ENCODE measurements at regions of chr14 and their contacts with region 1.

Region 1: GRCh38 chr14:63543000-63543825 is at the start of gene PPP2R5E:
- DNase-seq: peak; percentile 98 to 99
- H3K4me3 ChIP-seq: peak within 1 kb of the TSS; percentile 85
- H3K4me3 Mint-ChIP-seq: peak within 1 kb of the TSS; percentile 86
- H3K27ac Mint-ChIP-seq: peak within 1 kb of the TSS; percentile 89
- H3K4me1 ChIP-seq: peaks cover 16% of the 10 kb centered on the region
- H3K4me1 Mint-ChIP-seq: peaks cover 25% of the 10 kb centered on the region
- H3K27me3 ChIP-seq: no peaks in the 10 kb centered on the region
- H3K27me3 Mint-ChIP-seq: no peaks in the 10 kb centered on the region
- CTCF ChIP-seq: no peak
- total RNA-seq, gene PPP2R5E: 56.6 and 58.6 TPM in 2 replicates

Region 2: DNA sequence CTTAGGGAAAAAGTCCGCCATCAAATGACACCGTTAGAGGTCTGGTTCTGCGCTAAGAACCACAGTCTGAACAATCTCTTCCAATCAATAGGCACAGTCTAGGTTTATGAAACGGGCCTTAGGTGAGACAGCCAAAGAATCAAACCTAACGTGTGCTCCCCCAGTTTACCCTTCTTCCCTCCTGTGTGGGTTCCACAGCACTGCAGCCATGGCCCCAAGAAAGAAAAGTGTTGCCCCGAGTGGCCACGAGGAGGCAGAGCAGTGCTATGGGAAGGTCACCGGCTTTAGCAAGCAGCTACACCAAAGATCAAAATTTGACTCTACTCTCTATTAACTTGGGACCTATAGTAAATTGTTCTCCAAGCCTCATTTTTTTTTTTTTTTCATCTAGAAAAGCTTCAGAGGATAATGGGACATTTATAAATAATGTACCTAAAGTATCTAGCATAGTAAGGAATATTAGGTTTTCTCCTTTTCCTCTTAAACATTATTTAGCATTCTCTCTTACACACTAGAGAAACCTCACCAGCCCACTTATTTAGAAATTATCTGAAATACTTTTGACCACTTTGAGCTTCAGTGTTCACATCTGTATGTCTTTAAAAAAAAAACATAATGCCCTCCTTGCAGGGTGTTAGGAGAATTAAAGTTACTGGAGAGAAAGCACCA is 154.3 kb before region 1 on chr14:
- CTCF ChIA-PET with region 1: interaction called, 11 read pairs
- POLR2A ChIA-PET with region 1: no interaction called
- intact Hi-C with region 1: loop called (anchors 2 kb)
- DNase-seq: peak; percentile 46 to 57
- H3K4me3 ChIP-seq: no peak overlapping the region
- H3K4me3 Mint-ChIP-seq: no peak overlapping the region
- H3K27ac Mint-ChIP-seq: no peak overlapping the region
- H3K4me1 ChIP-seq: no peaks in the 10 kb centered on the region
- H3K4me1 Mint-ChIP-seq: no peaks in the 10 kb centered on the region
- H3K27me3 ChIP-seq: no peaks in the 10 kb centered on the region
- H3K27me3 Mint-ChIP-seq: no peaks in the 10 kb centered on the region
- CTCF ChIP-seq: peak; percentile 56 to 79

Region 3: GRCh38 chr14:63524537-63525155 is 18.6 kb before region 1 on chr14:
- CTCF ChIA-PET with region 1: no interaction called
- POLR2A ChIA-PET with region 1: interaction called, 12 read pairs
- intact Hi-C with region 1: no loop called
- DNase-seq: no peak
- H3K4me3 ChIP-seq: no peak overlapping the region
- H3K4me3 Mint-ChIP-seq: no peak overlapping the region
- H3K27ac Mint-ChIP-seq: peak overlapping the region; percentile 49
- H3K4me1 ChIP-seq: no peaks in the 10 kb centered on the region
- H3K4me1 Mint-ChIP-seq: peaks cover 11% of the 10 kb centered on the region
- H3K27me3 ChIP-seq: no peaks in the 10 kb centered on the region
- H3K27me3 Mint-ChIP-seq: no peaks in the 10 kb centered on the region
- CTCF ChIP-seq: no peak

Region 4: GRCh38 chr14:63652406-63652805 is 109.2 kb after region 1 on chr14:
- CTCF ChIA-PET with region 1: no interaction called
- POLR2A ChIA-PET with region 1: no interaction called
- intact Hi-C with region 1: no loop called
- DNase-seq: no peak
- H3K4me3 ChIP-seq: no peak overlapping the region
- H3K4me3 Mint-ChIP-seq: no peak overlapping the region
- H3K27ac Mint-ChIP-seq: no peak overlapping the region
- H3K4me1 ChIP-seq: peaks cover 10% of the 10 kb centered on the region
- H3K4me1 Mint-ChIP-seq: peaks cover 15% of the 10 kb centered on the region
- H3K27me3 ChIP-seq: no peaks in the 10 kb centered on the region
- H3K27me3 Mint-ChIP-seq: no peaks in the 10 kb centered on the region
- CTCF ChIP-seq: no peak

Region 5: GRCh38 chr14:63727774-63728728 is 184.8 kb after region 1 on chr14 and contains the start of gene SGPP1:
- CTCF ChIA-PET with region 1: no interaction called
- POLR2A ChIA-PET with region 1: interaction called, 4 read pairs
- intact Hi-C with region 1: loop called (anchors 2 kb)
- DNase-seq: peak; percentile 78 to 85
- H3K4me3 ChIP-seq: peak within 1 kb of the TSS; percentile 89
- H3K4me3 Mint-ChIP-seq: peak within 1 kb of the TSS; percentile 97
- H3K27ac Mint-ChIP-seq: peak within 1 kb of the TSS; percentile 95
- H3K4me1 ChIP-seq: peaks cover 6% of the 10 kb centered on the region
- H3K4me1 Mint-ChIP-seq: peaks cover 23% of the 10 kb centered on the region
- H3K27me3 ChIP-seq: no peaks in the 10 kb centered on the region
- H3K27me3 Mint-ChIP-seq: no peaks in the 10 kb centered on the region
- CTCF ChIP-seq: peak; percentile 46 to 55
- total RNA-seq, gene SGPP1: 15.2 and 16.9 TPM in 2 replicates

Region 6: GRCh38 chr14:63840981-63841380 is 297.8 kb after region 1 on chr14:
- CTCF ChIA-PET with region 1: no interaction called
- POLR2A ChIA-PET with region 1: no interaction called
- intact Hi-C with region 1: no loop called
- DNase-seq: peak in 1 of 2 experiments; percentile 16
- H3K4me3 ChIP-seq: no peak overlapping the region
- H3K4me3 Mint-ChIP-seq: no peak overlapping the region
- H3K27ac Mint-ChIP-seq: no peak overlapping the region
- H3K4me1 ChIP-seq: no peaks in the 10 kb centered on the region
- H3K4me1 Mint-ChIP-seq: no peaks in the 10 kb centered on the region
- H3K27me3 ChIP-seq: no peaks in the 10 kb centered on the region
- H3K27me3 Mint-ChIP-seq: no peaks in the 10 kb centered on the region
- CTCF ChIP-seq: no peak

Region 7: DNA sequence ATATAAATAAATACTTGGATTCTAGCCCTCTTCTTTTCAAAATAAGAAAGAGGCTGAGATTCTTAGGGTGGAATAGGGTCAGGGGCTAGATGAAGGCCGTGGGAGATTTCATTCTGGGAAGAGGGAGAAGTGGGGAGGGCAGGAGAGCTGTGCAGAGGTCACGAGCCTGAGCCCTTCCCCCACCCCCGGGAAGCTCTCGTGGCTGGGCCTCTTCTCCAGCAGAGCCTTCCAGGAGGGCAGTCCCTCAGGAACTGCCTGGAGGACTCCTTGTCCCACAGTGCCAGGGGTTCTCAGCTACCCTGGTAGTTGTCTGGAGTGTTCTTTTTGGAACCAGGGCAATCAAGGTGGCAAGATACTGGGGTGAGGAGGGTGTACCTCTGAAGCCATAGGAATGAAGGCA is 657.0 kb after region 1 on chr14:
- CTCF ChIA-PET with region 1: no interaction called
- POLR2A ChIA-PET with region 1: interaction called, 16 read pairs
- intact Hi-C with region 1: no loop called
- DNase-seq: no peak
- H3K4me3 ChIP-seq: no peak overlapping the region
- H3K4me3 Mint-ChIP-seq: no peak overlapping the region
- H3K27ac Mint-ChIP-seq: no peak overlapping the region
- H3K4me1 ChIP-seq: peaks cover 22% of the 10 kb centered on the region; the same call in 1 of the 2 replicates
- H3K4me1 Mint-ChIP-seq: peaks cover 13% of the 10 kb centered on the region
- H3K27me3 ChIP-seq: no peaks in the 10 kb centered on the region
- H3K27me3 Mint-ChIP-seq: no peaks in the 10 kb centered on the region
- CTCF ChIP-seq: no peak